ENCODE measurements at regions of chr2 and their contacts with region 1.

Region 1: DNA sequence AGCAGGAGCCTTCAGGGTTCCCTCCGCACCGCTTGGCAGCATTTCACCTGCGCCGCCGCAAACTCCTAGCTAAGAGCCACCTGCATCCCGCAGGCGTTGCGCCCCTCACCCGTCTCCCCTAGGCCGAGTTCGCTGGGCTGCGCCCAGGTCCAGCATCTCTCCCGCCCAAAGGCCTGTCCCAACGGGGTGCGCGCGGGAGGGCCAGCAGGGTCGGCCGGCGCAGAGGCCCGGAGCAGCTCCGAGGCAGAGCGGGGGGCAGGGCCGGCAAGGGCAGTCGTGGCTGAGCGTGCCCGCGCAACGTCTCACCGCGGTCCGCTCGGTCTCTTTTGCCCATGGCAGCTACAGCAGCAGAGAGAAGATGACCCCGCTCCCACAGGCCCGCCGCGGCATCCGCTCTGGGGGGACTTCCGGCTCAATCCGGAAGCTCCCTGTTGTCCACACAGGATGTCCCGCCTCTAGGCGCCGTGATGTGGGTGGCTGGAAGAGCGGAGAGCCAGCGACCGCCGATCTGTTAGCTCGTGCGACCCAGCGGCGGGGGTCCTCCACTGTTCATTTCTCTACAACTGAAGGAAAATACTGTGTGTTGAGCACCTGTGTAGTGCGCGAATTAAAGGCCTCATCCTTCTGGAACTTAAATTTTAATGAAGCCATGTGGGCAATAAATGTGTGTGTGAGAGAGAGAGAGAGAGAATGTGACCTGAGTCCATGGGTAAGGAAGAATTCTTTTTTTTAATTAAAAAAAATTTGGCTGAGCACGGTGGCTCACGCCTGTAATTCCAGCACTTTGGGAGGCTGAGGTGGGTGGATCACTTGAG is at the start of gene ERCC3:
- DNase-seq: peak; percentile 89
- ATAC-seq: peak; percentile 99
- H3K4me3 ChIP-seq: peak within 1 kb of the TSS; percentile 82 to 97 (median 88)
- H3K27ac ChIP-seq: peak within 1 kb of the TSS; percentile 69
- H3K4me1 ChIP-seq: peaks cover 22% of the 10 kb centered on the region
- H3K27me3 ChIP-seq: no peaks in the 10 kb centered on the region; a peak in 1 of 5 replicates
- CTCF ChIP-seq: no peak
- EP300 ChIP-seq: no peak
- POLR2A ChIP-seq: peak; percentile 92 to 97
- RAD21 ChIP-seq: peak; percentile 73
- total RNA-seq, gene ERCC3: 43.3 and 49.7 TPM in 2 replicates

Region 2: GRCh38 chr2:127086990-127087790 is 206.8 kb before region 1 on chr2:
- CTCF ChIA-PET with region 1: no interaction called
- POLR2A ChIA-PET with region 1: no interaction called
- in situ Hi-C with region 1: no loop called
- intact Hi-C with region 1: no loop called
- DNase-seq: no peak
- ATAC-seq: no peak
- H3K4me3 ChIP-seq: no peak overlapping the region
- H3K27ac ChIP-seq: no peak overlapping the region
- H3K4me1 ChIP-seq: peaks cover 10% of the 10 kb centered on the region
- H3K27me3 ChIP-seq: peaks cover 6 to 28% of the 10 kb centered on the region in 2 experiments; a peak in 3 of 5 replicates
- CTCF ChIP-seq: no peak
- EP300 ChIP-seq: no peak
- POLR2A ChIP-seq: no peak
- RAD21 ChIP-seq: no peak

Region 3: GRCh38 chr2:127157651-127158470 is 136.1 kb before region 1 on chr2:
- CTCF ChIA-PET with region 1: no interaction called
- POLR2A ChIA-PET with region 1: no interaction called
- in situ Hi-C with region 1: no loop called
- intact Hi-C with region 1: no loop called
- DNase-seq: peak; percentile 20
- ATAC-seq: peak; percentile 92
- H3K4me3 ChIP-seq: no peak overlapping the region
- H3K27ac ChIP-seq: no peak overlapping the region
- H3K4me1 ChIP-seq: no peaks in the 10 kb centered on the region
- H3K27me3 ChIP-seq: peaks cover 0 to 26% of the 10 kb centered on the region in 2 experiments; a peak in 2 of 5 replicates
- CTCF ChIP-seq: peak; percentile 47
- EP300 ChIP-seq: no peak
- POLR2A ChIP-seq: no peak
- RAD21 ChIP-seq: peak; percentile 25; the same call in 1 of the 2 replicates

Region 4: GRCh38 chr2:127278959-127279358 is 15.0 kb before region 1 on chr2:
- CTCF ChIA-PET with region 1: no interaction called
- POLR2A ChIA-PET with region 1: interaction called, 15 read pairs
- in situ Hi-C with region 1: no loop called
- intact Hi-C with region 1: no loop called
- DNase-seq: no peak
- ATAC-seq: no peak
- H3K4me3 ChIP-seq: no peak overlapping the region
- H3K27ac ChIP-seq: no peak overlapping the region
- H3K4me1 ChIP-seq: no peaks in the 10 kb centered on the region
- H3K27me3 ChIP-seq: no peaks in the 10 kb centered on the region
- CTCF ChIP-seq: no peak
- EP300 ChIP-seq: no peak
- POLR2A ChIP-seq: no peak
- RAD21 ChIP-seq: no peak

Region 5: DNA sequence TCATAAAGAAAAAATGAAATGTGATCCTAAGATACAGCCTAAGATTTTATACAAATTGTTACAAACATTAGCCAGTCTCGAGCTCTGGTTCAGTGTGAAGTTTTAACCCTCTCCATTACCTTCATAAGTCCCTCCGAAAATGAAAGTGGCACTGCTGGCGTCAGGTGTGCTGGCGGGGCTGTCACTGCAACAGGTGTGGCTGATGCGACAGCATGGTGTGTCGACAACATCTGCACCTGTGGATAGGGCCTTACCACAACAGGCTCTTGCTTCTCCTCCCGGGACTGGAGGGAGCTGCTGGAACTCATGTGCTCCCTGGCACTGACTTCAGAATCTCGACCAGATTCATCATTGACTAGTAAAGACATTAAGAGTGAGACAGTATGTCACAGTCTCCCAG is 723.6 kb after region 1 on chr2:
- CTCF ChIA-PET with region 1: no interaction called
- POLR2A ChIA-PET with region 1: no interaction called
- in situ Hi-C with region 1: no loop called
- intact Hi-C with region 1: no loop called
- DNase-seq: no peak
- ATAC-seq: no peak
- H3K4me3 ChIP-seq: no peak overlapping the region
- H3K27ac ChIP-seq: no peak overlapping the region
- H3K4me1 ChIP-seq: no peaks in the 10 kb centered on the region
- H3K27me3 ChIP-seq: no peaks in the 10 kb centered on the region
- CTCF ChIP-seq: no peak
- EP300 ChIP-seq: no peak
- POLR2A ChIP-seq: no peak
- RAD21 ChIP-seq: no peak